Sigmoid colon (tissue), 7 donors: ENCODE measurements at regions of chr12 and their contacts with region 1.

Region 1: DNA sequence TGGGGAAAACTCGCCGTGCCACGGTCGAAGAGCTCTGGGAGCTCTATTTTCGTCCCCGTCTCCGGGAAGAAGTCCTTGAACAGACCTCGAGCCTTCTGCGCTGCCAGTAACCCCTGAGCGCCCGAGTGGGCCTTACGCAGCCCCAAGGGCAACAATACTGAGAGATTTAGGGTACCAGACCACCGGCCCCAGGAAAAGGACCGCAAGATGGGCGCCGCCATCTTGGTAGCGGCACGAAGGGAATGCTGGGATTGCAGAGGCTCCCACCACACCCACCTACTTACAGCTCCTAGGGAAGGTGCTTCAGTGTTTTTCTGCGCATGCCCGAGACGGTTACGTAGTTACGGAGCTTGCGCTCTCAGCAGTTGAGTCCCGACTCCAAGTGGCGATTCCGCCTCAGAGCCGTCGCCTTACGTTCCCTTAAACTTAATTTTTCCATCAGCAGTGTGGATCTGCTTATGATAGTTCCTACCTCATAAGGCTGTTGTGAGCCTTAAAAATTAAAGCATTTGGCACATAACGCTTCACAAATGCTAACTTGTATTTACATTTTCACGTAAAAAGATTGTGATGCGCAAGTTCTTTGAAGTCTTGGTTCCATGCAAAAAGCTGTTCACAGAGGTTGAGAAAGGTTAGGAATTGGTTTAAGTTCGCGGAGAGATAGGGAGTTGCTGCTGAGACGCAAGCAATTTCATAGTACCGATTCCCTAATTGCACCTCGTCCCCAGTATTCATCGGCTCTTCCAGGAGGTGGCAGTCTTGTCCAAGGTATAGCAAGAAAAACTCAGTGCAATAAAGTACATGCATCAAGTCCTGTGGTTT is at the start of gene YARS2:
- DNase-seq: peak; percentile 98
- H3K4me3 ChIP-seq: peak within 1 kb of the TSS; percentile 63 to 90 (median 74)
- H3K27ac ChIP-seq: peak within 1 kb of the TSS; percentile 84 to 94 (median 90)
- H3K4me1 ChIP-seq: peaks cover 0 to 19% (median 16%) of the 10 kb centered on the region in 4 donors
- H3K27me3 ChIP-seq: no peaks in the 10 kb centered on the region
- CTCF ChIP-seq: peak; percentile 73 to 85 (median 78)
- EP300 ChIP-seq: no peak
- POLR2A ChIP-seq: peak; percentile 22 to 33
- total RNA-seq, gene YARS2: 10.0 to 15.5 (median 14.7) TPM

Region 2: GRCh38 chr12:32918890-32919801 is 163.3 kb after region 1 on chr12:
- intact Hi-C with region 1: loop called (anchors 5 kb)
- DNase-seq: no peak
- H3K4me3 ChIP-seq: no peak overlapping the region
- H3K27ac ChIP-seq: no peak overlapping the region
- H3K4me1 ChIP-seq: peaks cover 0 to 3% (median 0%) of the 10 kb centered on the region in 4 donors
- H3K27me3 ChIP-seq: no peaks in the 10 kb centered on the region
- CTCF ChIP-seq: peak in 1 of 4 experiments; percentile 21
- EP300 ChIP-seq: no peak
- POLR2A ChIP-seq: no peak

Region 3: GRCh38 chr12:34022079-34022830 is 1266.4 kb after region 1 on chr12 and contains the start of gene ALG10:
- intact Hi-C with region 1: loop called (anchors 1 kb)
- DNase-seq: peak; percentile 98
- H3K4me3 ChIP-seq: peak within 1 kb of the TSS; percentile 46 to 69 (median 66)
- H3K27ac ChIP-seq: peak within 1 kb of the TSS; percentile 82 to 88 (median 87)
- H3K4me1 ChIP-seq: peaks cover 0 to 18% (median 11%) of the 10 kb centered on the region in 4 donors
- H3K27me3 ChIP-seq: no peaks in the 10 kb centered on the region
- CTCF ChIP-seq: peak; percentile 25 to 66 (median 51)
- EP300 ChIP-seq: no peak
- POLR2A ChIP-seq: no peak
- total RNA-seq, gene ALG10: 3.7 to 7.9 (median 6.2) TPM